HepG2 (cell line): ENCODE measurements at regions of chr1 and their contacts with region 1.

Region 1: GRCh38 chr1:177959811-177960515 is 9.9 kb downstream of the SEC16B start:
- DNase-seq: peak; percentile 29
- ATAC-seq: peak; percentile 86
- H3K4me3 ChIP-seq: no peak overlapping the region
- H3K27ac ChIP-seq: no peak overlapping the region
- H3K4me1 ChIP-seq: no peaks in the 10 kb centered on the region
- H3K27me3 ChIP-seq: no peaks in the 10 kb centered on the region
- CTCF ChIP-seq: peak; percentile 62
- EP300 ChIP-seq: no peak
- POLR2A ChIP-seq: no peak
- RAD21 ChIP-seq: 0 out of 2 replicates have a peak, but pooled peaks have one; percentile 37

Region 2: DNA sequence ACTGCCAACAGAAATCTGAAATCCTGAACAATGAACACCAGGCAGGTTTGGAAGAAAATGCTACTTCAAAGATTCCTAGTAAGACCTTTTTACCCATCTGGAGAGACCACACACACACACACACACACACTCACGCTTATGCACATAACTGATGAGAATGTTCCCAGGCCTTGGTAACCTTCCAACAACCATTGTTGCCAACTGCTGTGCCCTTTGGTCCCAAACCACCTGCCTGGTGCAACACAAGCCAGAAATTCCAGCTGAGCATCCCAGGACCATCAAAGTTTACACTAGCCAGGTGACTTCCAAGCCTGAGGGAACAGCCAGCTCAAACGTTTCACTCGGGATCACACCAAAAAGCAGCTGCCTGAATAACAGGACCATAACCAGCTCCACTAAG is 47.0 kb before region 1 on chr1:
- CTCF ChIA-PET with region 1: no interaction called
- POLR2A ChIA-PET with region 1: no interaction called
- in situ Hi-C with region 1: no loop called
- intact Hi-C with region 1: no loop called
- DNase-seq: peak; percentile 10
- ATAC-seq: no peak
- H3K4me3 ChIP-seq: no peak overlapping the region
- H3K27ac ChIP-seq: no peak overlapping the region
- H3K4me1 ChIP-seq: peaks cover 17% of the 10 kb centered on the region
- H3K27me3 ChIP-seq: no peaks in the 10 kb centered on the region
- CTCF ChIP-seq: no peak
- EP300 ChIP-seq: no peak
- POLR2A ChIP-seq: no peak
- RAD21 ChIP-seq: no peak

Region 3: DNA sequence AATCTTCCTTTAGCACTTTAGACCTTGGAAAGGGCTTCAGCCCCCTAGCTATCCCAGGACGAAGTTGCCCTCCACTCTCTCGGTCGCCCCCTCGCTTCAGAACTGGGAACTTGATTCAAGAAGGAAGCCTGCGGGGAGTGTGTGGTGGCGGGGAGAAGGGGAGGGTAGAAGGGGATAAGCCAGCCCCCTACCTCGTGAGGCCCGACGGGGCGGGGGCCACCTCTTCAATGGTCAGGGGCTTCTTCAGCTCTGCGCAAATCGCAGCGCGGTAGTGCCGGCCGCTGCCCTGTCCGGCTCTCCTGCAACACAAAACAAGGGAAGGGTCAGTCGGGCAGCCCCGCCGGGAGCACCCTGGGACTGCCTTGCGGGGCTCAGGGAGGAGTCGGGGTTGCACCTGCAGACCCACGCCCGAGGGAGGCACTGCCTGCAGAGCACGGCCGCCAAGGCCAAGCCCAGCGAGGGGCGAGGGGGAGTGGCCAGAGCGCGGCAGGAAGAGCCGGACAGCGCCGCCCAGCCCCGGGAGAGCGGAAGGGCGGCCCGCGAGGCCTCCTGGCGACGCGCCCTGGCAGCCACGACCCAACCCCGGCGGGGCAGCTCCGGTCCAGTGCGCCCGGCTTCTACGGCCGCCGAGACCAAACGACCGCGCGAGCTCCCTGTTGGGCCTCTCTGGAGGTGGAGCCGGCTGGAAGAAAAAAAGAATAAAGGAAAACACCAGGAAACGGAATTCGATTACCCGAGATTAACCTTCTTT is 77.7 kb after region 1 on chr1:
- CTCF ChIA-PET with region 1: interaction called, 10 read pairs
- POLR2A ChIA-PET with region 1: interaction called, 3 read pairs
- in situ Hi-C with region 1: no loop called
- intact Hi-C with region 1: loop called (anchors 5 kb)
- DNase-seq: peak; percentile 67
- ATAC-seq: peak; percentile 99
- H3K4me3 ChIP-seq: peak overlapping the region; percentile 62 to 70 (median 67); a peak in 5 of 6 replicates
- H3K27ac ChIP-seq: peak overlapping the region; percentile 55
- H3K4me1 ChIP-seq: peaks cover 66% of the 10 kb centered on the region
- H3K27me3 ChIP-seq: no peaks in the 10 kb centered on the region
- CTCF ChIP-seq: peak; percentile 84
- EP300 ChIP-seq: no peak
- POLR2A ChIP-seq: peak in 1 of 2 experiments; percentile 76; a peak in 3 of 4 replicates
- RAD21 ChIP-seq: peak; percentile 90

Region 4: DNA sequence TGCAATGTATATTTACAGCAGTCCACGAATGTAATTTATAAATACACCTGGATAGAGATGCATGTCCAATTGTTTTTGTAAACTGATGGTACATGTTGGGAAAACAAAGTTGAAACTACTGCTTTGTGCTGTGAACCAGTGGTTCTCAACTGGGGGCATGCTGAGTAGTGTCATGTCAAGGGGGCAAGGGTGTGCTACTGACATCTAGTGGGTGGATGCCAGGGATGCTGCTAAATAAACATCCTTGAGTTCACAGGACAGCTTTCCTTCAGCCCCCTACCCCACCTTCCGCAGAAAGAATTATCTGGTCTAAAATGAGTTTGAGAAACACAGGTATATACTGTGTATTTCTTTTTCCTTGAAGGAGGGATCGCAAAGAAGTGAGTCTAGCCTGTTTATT is 229.9 kb after region 1 on chr1:
- CTCF ChIA-PET with region 1: no interaction called
- POLR2A ChIA-PET with region 1: no interaction called
- in situ Hi-C with region 1: loop called (anchors 5 kb)
- intact Hi-C with region 1: no loop called
- DNase-seq: peak; percentile 51
- ATAC-seq: peak; percentile 86
- H3K4me3 ChIP-seq: no peak overlapping the region
- H3K27ac ChIP-seq: no peak overlapping the region
- H3K4me1 ChIP-seq: peaks cover 4% of the 10 kb centered on the region; the same call in 1 of the 2 replicates
- H3K27me3 ChIP-seq: no peaks in the 10 kb centered on the region
- CTCF ChIP-seq: peak; percentile 86
- EP300 ChIP-seq: no peak
- POLR2A ChIP-seq: no peak
- RAD21 ChIP-seq: peak; percentile 70

Region 5: DNA sequence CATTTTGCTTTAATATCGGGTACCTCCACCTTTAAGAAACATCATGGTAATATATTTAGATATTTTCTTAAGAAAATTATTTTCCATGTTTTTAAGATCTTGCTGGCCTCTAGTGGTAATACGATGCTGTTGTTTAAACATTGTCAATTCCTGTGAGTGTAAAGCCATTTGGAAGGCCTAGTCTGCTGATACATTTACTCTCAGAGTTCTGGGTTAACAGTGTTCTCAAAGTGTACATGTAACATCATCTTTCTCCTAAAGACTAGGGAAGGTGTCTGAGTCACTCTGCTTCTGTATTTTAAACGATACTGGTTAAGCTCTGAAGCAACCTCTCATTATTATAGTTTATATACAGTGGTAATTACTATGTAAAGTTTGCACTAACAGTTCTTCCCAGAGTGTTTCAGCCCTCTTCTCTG is 323.0 kb after region 1 on chr1:
- CTCF ChIA-PET with region 1: no interaction called
- POLR2A ChIA-PET with region 1: no interaction called
- in situ Hi-C with region 1: loop called (anchors 5 kb)
- intact Hi-C with region 1: no loop called
- DNase-seq: peak; percentile 25
- ATAC-seq: no peak
- H3K4me3 ChIP-seq: no peak overlapping the region
- H3K27ac ChIP-seq: no peak overlapping the region
- H3K4me1 ChIP-seq: peaks cover 7% of the 10 kb centered on the region; the same call in 1 of the 2 replicates
- H3K27me3 ChIP-seq: no peaks in the 10 kb centered on the region
- CTCF ChIP-seq: peak; percentile 49
- EP300 ChIP-seq: no peak
- POLR2A ChIP-seq: no peak
- RAD21 ChIP-seq: no peak